Activated CD8-positive, alpha-beta T cell treated with anti-CD3 and anti-CD28 coated beads for 36 hours (primary cell): ENCODE measurements at regions of chr11 and their contacts with region 1.

Region 1: DNA sequence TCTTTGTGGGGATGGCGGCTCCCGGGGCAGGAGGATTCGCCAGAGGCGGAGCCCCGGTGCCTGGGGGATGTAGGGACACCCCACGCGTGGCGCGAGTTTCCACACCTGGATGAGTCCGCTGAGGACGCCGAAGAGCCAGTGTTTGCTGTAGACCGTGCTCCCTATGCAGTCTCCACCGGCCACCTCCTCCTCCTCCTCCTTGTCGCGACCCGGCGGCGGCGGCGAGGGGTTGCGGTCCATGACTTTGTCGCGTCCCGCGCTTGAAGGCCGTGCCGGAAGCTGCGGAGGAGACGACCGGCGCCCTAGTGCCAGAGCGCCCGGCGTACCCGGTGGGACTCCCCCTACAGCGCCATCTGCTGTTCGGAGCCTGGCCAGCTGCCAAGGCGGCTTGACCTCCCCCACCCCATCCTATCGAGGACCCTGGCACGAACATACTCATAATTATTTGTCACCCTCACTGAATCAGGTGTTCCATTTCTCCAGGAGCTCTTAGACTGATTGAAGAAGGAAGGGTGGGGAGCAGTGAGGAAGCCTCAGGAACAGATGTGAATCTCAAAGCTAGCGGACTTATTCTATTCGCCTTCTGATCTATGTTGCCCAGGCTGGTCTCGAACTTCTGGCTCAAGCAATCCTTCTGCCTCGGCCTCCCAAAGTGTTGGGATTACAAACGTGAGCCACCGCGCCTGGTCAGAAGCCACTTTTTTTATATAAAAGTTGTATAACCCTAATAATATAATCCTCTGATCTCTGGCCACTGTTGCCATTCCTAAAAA is at the start of gene SAAL1:
- DNase-seq: peak; percentile 92
- ATAC-seq: peak; percentile 97
- H3K4me3 Mint-ChIP-seq: peak within 1 kb of the TSS; percentile 89
- H3K27ac Mint-ChIP-seq: peak within 1 kb of the TSS; percentile 86
- H3K4me1 Mint-ChIP-seq: peaks cover 40% of the 10 kb centered on the region
- H3K27me3 Mint-ChIP-seq: no peaks in the 10 kb centered on the region
- CTCF ChIP-seq: peak; percentile 74
- total RNA-seq, gene SAAL1: 38.1 to 39.9 TPM

Region 2: DNA sequence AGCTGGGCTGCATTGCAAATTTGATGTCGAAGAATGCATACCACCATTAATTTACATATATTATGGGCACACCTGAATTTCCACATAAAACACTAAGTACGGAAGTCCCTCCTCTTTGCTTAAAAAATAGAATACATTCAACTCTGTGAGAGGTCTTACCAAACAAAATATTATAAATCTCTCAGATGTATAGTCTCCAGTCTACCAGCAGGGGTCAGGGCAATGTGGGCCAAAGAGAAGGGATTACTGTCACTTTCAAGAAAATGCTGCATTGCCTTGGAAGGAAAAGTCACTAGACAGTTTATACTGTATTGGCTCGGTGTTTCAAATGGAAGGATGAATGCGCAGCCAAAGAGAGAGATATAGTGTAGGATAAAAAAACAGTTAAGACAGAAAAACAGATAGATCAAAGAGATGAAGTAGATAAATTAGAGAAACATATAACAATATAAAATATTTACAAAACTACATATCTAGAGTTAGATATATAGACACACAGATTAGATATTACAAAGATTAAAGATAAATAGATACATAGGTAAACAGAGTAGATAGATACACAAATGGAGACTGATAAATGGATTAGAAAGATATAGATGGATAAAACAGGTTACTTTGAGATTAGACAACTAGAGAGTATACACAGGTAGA is 114.1 kb before region 1 on chr11:
- CTCF ChIA-PET with region 1: interaction called, 11 read pairs
- POLR2A ChIA-PET with region 1: no interaction called
- intact Hi-C with region 1: no loop called
- DNase-seq: peak; percentile 54
- ATAC-seq: peak; percentile 83
- H3K4me3 Mint-ChIP-seq: no peak overlapping the region
- H3K27ac Mint-ChIP-seq: no peak overlapping the region
- H3K4me1 Mint-ChIP-seq: peaks cover 2% of the 10 kb centered on the region
- H3K27me3 Mint-ChIP-seq: no peaks in the 10 kb centered on the region
- CTCF ChIP-seq: peak; percentile 86

Region 3: DNA sequence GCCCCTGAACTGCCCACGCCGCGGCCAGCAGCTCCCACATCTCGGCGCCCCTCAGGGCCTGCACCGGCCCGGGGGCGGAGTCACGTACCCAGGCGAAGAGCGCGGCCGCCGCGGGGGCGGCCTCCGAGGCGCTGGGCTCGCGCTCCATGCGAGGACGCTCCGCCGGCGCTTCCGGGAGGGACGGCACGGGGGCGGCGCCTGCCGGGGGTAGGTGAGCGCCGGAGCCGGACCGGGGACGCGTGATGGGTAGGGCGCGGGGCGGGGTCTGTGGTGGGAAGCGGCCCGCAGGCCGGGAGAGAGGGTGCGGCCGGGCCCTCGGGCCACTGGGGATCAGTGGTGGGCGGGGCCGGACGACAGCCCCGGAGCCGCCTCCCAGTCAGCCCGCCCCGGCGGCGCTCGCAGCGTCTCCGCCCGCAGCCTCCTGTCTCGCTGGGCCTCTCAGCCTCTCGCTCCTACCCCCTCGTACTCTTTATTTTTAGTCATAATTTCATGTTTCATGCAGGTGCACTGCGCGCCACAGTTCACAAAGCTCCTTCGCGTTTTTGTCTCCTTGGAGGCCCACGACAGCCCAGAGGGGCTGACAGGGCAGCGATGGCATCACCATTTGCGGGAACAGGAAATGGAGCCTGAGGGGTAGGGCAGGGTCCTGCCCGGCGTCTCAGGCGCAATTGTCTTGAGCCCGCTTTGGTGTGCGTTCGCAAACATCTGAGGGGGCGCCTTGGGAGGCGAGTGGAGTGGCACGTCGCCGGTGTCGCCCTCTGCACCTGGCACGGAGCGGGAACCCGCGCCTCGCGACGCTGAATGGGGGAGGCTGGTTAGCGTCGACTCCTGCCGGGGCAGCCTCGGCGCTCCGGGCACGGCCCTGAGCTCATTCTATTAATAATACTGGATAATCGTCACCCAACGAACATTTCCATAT is 92.9 kb before region 1 on chr11 and contains the start of gene SERGEF:
- CTCF ChIA-PET with region 1: interaction called, 4 read pairs
- POLR2A ChIA-PET with region 1: interaction called, 3 read pairs
- intact Hi-C with region 1: loop called (anchors 5 kb)
- DNase-seq: peak; percentile 94
- ATAC-seq: peak; percentile 94
- H3K4me3 Mint-ChIP-seq: peak within 1 kb of the TSS; percentile 92
- H3K27ac Mint-ChIP-seq: peak within 1 kb of the TSS; percentile 99
- H3K4me1 Mint-ChIP-seq: peaks cover 41% of the 10 kb centered on the region
- H3K27me3 Mint-ChIP-seq: no peaks in the 10 kb centered on the region
- CTCF ChIP-seq: no peak
- total RNA-seq, gene SERGEF: 56.2 to 64.4 TPM

Region 4: DNA sequence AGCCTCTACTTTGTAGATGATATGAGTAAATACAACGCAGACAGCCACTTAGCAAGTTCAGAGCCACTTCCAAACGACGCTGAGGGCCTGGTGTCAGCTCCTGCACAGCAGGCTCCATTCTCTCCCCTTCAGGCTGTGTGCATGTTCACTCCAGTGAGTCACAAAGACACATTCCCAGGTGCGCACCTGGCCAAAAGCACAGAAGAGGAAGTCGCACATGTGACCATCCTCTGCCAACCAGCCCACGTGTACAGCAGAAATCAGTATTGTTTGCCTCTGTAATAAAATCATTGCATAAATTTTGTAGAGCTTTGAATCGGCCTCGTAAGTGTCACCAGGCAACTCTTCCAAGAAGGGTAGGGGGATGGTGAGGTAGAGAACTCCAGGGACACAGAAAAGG is 40.4 kb before region 1 on chr11:
- CTCF ChIA-PET with region 1: no interaction called
- POLR2A ChIA-PET with region 1: no interaction called
- intact Hi-C with region 1: no loop called
- DNase-seq: no peak
- ATAC-seq: no peak
- H3K4me3 Mint-ChIP-seq: no peak overlapping the region
- H3K27ac Mint-ChIP-seq: no peak overlapping the region
- H3K4me1 Mint-ChIP-seq: no peaks in the 10 kb centered on the region
- H3K27me3 Mint-ChIP-seq: no peaks in the 10 kb centered on the region
- CTCF ChIP-seq: no peak